HepG2 (cell line): ENCODE measurements at regions of chr6 and their contacts with region 1.

Region 1: GRCh38 chr6:34459899-34460593 is 5.8 kb upstream of the PACSIN1 start:
- DNase-seq: peak; percentile 59
- ATAC-seq: peak; percentile 25; the same call in 2 of the 3 replicates
- H3K4me3 ChIP-seq: no peak overlapping the region
- H3K27ac ChIP-seq: no peak overlapping the region
- H3K4me1 ChIP-seq: peaks cover 52% of the 10 kb centered on the region
- H3K27me3 ChIP-seq: peaks cover under 1 to 10% of the 10 kb centered on the region in 2 experiments; a peak in 1 of 5 replicates
- CTCF ChIP-seq: peak; percentile 87
- EP300 ChIP-seq: no peak
- POLR2A ChIP-seq: no peak
- RAD21 ChIP-seq: peak; percentile 80

Region 2: GRCh38 chr6:34358389-34358905 is 101.6 kb before region 1 on chr6:
- CTCF ChIA-PET with region 1: no interaction called
- POLR2A ChIA-PET with region 1: no interaction called
- in situ Hi-C with region 1: no loop called
- intact Hi-C with region 1: no loop called
- DNase-seq: no peak
- ATAC-seq: no peak
- H3K4me3 ChIP-seq: no peak overlapping the region
- H3K27ac ChIP-seq: no peak overlapping the region
- H3K4me1 ChIP-seq: peaks cover 24% of the 10 kb centered on the region
- H3K27me3 ChIP-seq: no peaks in the 10 kb centered on the region
- CTCF ChIP-seq: no peak
- EP300 ChIP-seq: no peak
- POLR2A ChIP-seq: no peak
- RAD21 ChIP-seq: no peak

Region 3: GRCh38 chr6:34425498-34426410 is 34.3 kb before region 1 on chr6 and contains the start of gene RPS10:
- CTCF ChIA-PET with region 1: no interaction called
- POLR2A ChIA-PET with region 1: interaction called, 20 read pairs
- in situ Hi-C with region 1: no loop called
- intact Hi-C with region 1: no loop called
- DNase-seq: peak; percentile 90
- ATAC-seq: peak; percentile 93
- H3K4me3 ChIP-seq: peak within 1 kb of the TSS; percentile 74 to 98 (median 89)
- H3K27ac ChIP-seq: peak within 1 kb of the TSS; percentile 73
- H3K4me1 ChIP-seq: peaks cover 58% of the 10 kb centered on the region
- H3K27me3 ChIP-seq: peaks cover 0 to 2% of the 10 kb centered on the region in 2 experiments; a peak in 1 of 5 replicates
- CTCF ChIP-seq: peak; percentile 52
- EP300 ChIP-seq: 0 out of 4 replicates have a peak, but pooled peaks of 1 of the 2 experiments have one; percentile 38
- POLR2A ChIP-seq: peak; percentile 97 to 98
- RAD21 ChIP-seq: peak; percentile 56
- total RNA-seq, gene RPS10: 2,909 and 3,503 TPM in 2 replicates

Region 4: GRCh38 chr6:34526992-34527728 is 67.1 kb after region 1 on chr6:
- CTCF ChIA-PET with region 1: no interaction called
- POLR2A ChIA-PET with region 1: no interaction called
- in situ Hi-C with region 1: no loop called
- intact Hi-C with region 1: loop called (anchors 2 kb)
- DNase-seq: peak; percentile 86
- ATAC-seq: peak; percentile 90
- H3K4me3 ChIP-seq: peak overlapping the region; percentile 37 to 70 (median 42)
- H3K27ac ChIP-seq: no peak overlapping the region
- H3K4me1 ChIP-seq: peaks cover 36% of the 10 kb centered on the region
- H3K27me3 ChIP-seq: peaks cover 10 to 54% of the 10 kb centered on the region in 2 experiments; a peak in 4 of 5 replicates
- CTCF ChIP-seq: peak; percentile 98
- EP300 ChIP-seq: no peak
- POLR2A ChIP-seq: no peak
- RAD21 ChIP-seq: peak; percentile 94

Region 5: GRCh38 chr6:34560366-34561226 is 100.5 kb after region 1 on chr6:
- CTCF ChIA-PET with region 1: no interaction called
- POLR2A ChIA-PET with region 1: interaction called, 3 read pairs
- in situ Hi-C with region 1: no loop called
- intact Hi-C with region 1: loop called (anchors 1 kb)
- DNase-seq: peak; percentile 89
- ATAC-seq: peak; percentile 78
- H3K4me3 ChIP-seq: peak overlapping the region; percentile 12 to 61 (median 20); a peak in 3 of 6 replicates
- H3K27ac ChIP-seq: no peak overlapping the region
- H3K4me1 ChIP-seq: peaks cover 44% of the 10 kb centered on the region
- H3K27me3 ChIP-seq: peaks cover 13 to 47% of the 10 kb centered on the region in 2 experiments; a peak in 4 of 5 replicates
- CTCF ChIP-seq: peak; percentile 80
- EP300 ChIP-seq: 0 out of 4 replicates have a peak, but pooled peaks of 1 of the 2 experiments have one; percentile 9
- POLR2A ChIP-seq: no peak
- RAD21 ChIP-seq: peak; percentile 77

Region 6: DNA sequence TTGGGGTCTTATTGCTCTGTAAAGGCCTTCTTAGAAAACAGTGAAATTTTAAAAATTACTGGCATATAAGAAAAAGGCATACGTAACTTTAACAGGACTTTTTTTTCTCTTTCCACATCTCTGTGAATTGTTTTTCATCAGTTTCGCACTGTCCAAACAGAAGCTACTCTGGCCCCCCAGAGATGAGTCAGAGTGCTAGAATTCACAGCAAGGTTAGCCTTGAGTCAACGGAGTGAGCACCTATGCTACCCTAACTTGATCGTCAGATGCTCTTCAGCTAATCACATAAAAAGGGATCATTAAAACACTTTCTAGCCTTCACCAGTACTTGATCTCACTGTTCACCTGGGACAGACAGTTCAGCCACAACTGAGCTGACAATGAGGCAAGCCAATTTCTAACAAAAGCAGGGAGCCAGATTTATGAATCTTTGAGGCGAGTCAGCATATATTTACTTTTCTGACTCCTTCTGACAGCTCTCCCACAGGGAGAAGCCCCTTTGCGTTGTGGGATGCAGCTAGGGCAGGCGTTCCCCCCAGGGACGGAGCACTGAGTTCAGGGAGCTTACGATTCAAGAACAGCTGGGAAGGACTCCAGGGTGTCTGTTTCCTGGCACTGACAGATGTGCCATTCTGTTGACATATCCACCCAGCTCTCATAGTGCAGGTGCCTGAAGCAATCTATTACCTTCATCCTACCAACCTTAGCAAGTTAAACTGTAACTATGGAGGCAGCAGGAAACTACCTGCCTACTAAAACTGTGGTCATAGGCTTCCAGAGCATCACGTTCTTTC is 142.5 kb after region 1 on chr6:
- CTCF ChIA-PET with region 1: no interaction called
- POLR2A ChIA-PET with region 1: interaction called, 5 read pairs
- in situ Hi-C with region 1: loop called (anchors 10 kb)
- intact Hi-C with region 1: no loop called
- DNase-seq: peak; percentile 82
- ATAC-seq: peak; percentile 91
- H3K4me3 ChIP-seq: no peak overlapping the region
- H3K27ac ChIP-seq: peak overlapping the region; percentile 8
- H3K4me1 ChIP-seq: peaks cover 54% of the 10 kb centered on the region
- H3K27me3 ChIP-seq: no peaks in the 10 kb centered on the region
- CTCF ChIP-seq: 0 out of 2 replicates have a peak, but pooled peaks have one; percentile 2
- EP300 ChIP-seq: no peak
- POLR2A ChIP-seq: no peak
- RAD21 ChIP-seq: no peak

Region 7: DNA sequence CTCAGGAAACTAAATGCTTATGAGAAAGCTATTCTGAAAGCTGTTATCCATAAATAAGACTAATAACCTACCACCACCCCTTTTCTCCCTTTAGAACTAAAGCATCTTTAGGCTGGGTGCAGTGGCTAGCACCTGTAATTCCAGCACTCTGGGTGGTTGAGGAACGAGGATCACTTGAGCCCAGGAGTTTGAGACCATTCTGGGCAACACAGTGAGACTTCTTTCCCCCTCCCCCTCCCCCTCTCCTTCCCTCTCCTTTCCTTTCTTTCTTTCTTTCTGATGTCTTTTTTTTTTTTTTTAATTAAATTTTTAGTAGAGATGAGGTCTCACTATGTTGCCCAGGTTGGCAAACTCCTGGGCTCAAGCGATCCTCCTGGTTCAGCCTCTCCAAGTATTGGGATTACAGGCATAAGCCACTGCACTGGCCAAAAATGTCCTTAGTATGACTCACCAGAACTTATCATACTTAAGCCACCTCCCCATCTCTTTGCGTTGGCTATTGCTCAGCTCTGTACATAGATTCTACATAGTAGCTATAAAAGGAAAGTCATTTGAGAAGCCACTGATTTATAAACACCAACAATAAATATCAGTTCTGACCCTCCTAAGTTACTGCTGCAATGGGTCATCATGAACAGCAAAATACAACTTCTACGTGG is 150.9 kb after region 1 on chr6:
- CTCF ChIA-PET with region 1: interaction called, 29 read pairs
- POLR2A ChIA-PET with region 1: interaction called, 17 read pairs
- in situ Hi-C with region 1: loop called (anchors 10 kb)
- intact Hi-C with region 1: loop called (anchors 1 kb)
- DNase-seq: peak; percentile 31
- ATAC-seq: no peak
- H3K4me3 ChIP-seq: no peak overlapping the region
- H3K27ac ChIP-seq: peak overlapping the region; percentile 37
- H3K4me1 ChIP-seq: peaks cover 13% of the 10 kb centered on the region
- H3K27me3 ChIP-seq: no peaks in the 10 kb centered on the region
- CTCF ChIP-seq: no peak
- EP300 ChIP-seq: no peak
- POLR2A ChIP-seq: no peak
- RAD21 ChIP-seq: no peak

Region 8: DNA sequence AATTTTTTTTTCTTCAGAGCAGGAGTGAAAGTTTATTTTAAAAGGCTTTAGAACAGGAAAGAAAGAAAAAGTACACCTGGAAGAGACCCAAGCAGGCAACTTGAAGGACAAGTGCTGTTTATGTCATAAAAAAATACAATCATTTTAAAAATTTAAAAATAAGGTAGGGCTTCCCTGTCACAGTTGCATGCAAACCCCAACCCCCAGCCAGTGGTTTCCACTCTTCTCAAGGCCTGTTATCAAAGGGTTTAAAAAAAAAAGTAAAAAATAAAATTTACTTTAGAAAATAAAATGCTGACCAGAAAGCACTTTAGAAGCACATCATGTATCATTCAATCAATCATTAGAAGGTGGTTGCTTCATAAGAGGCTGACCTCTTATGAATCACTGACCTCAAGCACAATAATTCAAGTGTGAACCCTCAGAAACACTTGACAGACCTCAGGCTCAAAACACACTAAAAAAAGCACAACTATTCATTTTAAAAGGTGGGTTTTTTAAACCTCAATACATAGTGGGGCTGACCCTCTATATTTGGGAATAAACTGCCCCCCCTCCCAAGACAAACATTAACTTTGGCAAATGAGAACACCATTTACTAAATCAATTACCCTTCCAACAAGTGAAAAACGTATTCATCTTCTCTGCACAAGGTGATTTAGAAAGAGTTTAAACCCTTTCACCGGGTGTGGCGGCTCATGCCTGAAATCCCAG is 220.9 kb after region 1 on chr6:
- CTCF ChIA-PET with region 1: no interaction called
- POLR2A ChIA-PET with region 1: no interaction called
- in situ Hi-C with region 1: no loop called
- intact Hi-C with region 1: no loop called
- DNase-seq: no peak
- ATAC-seq: no peak
- H3K4me3 ChIP-seq: no peak overlapping the region
- H3K27ac ChIP-seq: peak overlapping the region; percentile 40
- H3K4me1 ChIP-seq: peaks cover 57% of the 10 kb centered on the region
- H3K27me3 ChIP-seq: no peaks in the 10 kb centered on the region
- CTCF ChIP-seq: no peak
- EP300 ChIP-seq: no peak
- POLR2A ChIP-seq: no peak
- RAD21 ChIP-seq: no peak